ENCODE measurements at regions of chr1 and their contacts with region 1.

Region 1: GRCh38 chr1:37692078-37692833 is at the start of gene CDCA8:
- DNase-seq: peak; percentile 97 to 100 (median 98)
- ATAC-seq: peak; percentile 92
- H3K4me3 ChIP-seq: peak within 1 kb of the TSS; percentile 92
- H3K27ac ChIP-seq: peak within 1 kb of the TSS; percentile 90
- H3K4me1 ChIP-seq: peaks cover 19 to 32% of the 10 kb centered on the region in 2 experiments
- H3K27me3 ChIP-seq: no peaks in the 10 kb centered on the region
- CTCF ChIP-seq: peak; percentile 76 to 85 (median 84)
- EP300 ChIP-seq: no peak; the same call in 1 of the 2 replicates
- POLR2A ChIP-seq: peak; percentile 98
- RAD21 ChIP-seq: no peak
- polyA plus RNA-seq, gene CDCA8: 84.3 to 148 TPM

Region 2: GRCh38 chr1:37479255-37480124 is 212.8 kb before region 1 on chr1:
- CTCF ChIA-PET with region 1: no interaction called
- POLR2A ChIA-PET with region 1: interaction called, 11 read pairs
- in situ Hi-C with region 1: no loop called
- intact Hi-C with region 1: no loop called
- DNase-seq: peak; percentile 92 to 97 (median 94)
- ATAC-seq: peak; percentile 85
- H3K4me3 ChIP-seq: peak overlapping the region; percentile 35
- H3K27ac ChIP-seq: peak overlapping the region; percentile 94
- H3K4me1 ChIP-seq: peaks cover 52 to 74% of the 10 kb centered on the region in 2 experiments
- H3K27me3 ChIP-seq: no peaks in the 10 kb centered on the region
- CTCF ChIP-seq: no peak
- EP300 ChIP-seq: peak; percentile 73
- POLR2A ChIP-seq: peak; percentile 65
- RAD21 ChIP-seq: no peak

Region 3: DNA sequence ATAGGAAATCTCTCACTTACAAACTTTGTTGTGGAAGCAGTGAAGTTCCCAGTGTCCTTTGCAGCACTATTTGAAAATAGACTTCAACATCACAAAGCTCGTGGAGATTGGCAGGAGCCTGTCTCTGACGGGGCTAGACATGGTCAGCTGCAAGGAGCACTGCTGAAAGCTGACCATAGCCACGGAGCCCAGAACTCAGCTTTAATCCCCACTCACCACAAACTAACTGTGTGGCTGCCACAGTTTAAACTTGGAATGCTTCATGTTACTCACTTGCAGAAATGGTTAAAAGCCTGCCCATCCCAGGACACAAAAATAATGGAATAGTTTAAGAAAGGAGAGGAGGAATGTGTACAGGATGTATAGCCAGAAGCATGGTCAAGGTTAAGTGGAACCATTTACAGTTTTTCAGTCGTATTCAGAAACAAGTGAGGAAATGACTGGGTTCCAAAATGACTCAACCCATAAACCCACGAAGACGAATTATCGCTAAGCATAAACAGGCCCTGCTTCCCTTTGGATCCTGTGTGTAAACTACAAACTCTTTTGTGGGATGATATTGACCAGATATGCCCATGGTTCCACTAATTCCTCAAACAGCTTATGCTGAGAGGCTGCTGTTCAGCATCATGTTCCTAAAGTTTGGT is 117.3 kb before region 1 on chr1:
- CTCF ChIA-PET with region 1: no interaction called
- POLR2A ChIA-PET with region 1: no interaction called
- in situ Hi-C with region 1: no loop called
- intact Hi-C with region 1: no loop called
- DNase-seq: no peak
- ATAC-seq: no peak
- H3K4me3 ChIP-seq: no peak overlapping the region
- H3K27ac ChIP-seq: no peak overlapping the region
- H3K4me1 ChIP-seq: no peaks in the 10 kb centered on the region
- H3K27me3 ChIP-seq: no peaks in the 10 kb centered on the region
- CTCF ChIP-seq: no peak
- EP300 ChIP-seq: no peak
- POLR2A ChIP-seq: no peak
- RAD21 ChIP-seq: no peak

Region 4: GRCh38 chr1:37636435-37636834 is 55.8 kb before region 1 on chr1:
- CTCF ChIA-PET with region 1: no interaction called
- POLR2A ChIA-PET with region 1: no interaction called
- in situ Hi-C with region 1: no loop called
- intact Hi-C with region 1: no loop called
- DNase-seq: no peak
- ATAC-seq: no peak
- H3K4me3 ChIP-seq: no peak overlapping the region
- H3K27ac ChIP-seq: no peak overlapping the region
- H3K4me1 ChIP-seq: peaks cover 0 to 18% of the 10 kb centered on the region in 2 experiments; a peak in 1 of 5 replicates
- H3K27me3 ChIP-seq: peaks cover 61 to 74% of the 10 kb centered on the region in 2 experiments
- CTCF ChIP-seq: no peak
- EP300 ChIP-seq: no peak
- POLR2A ChIP-seq: no peak
- RAD21 ChIP-seq: no peak

Region 5: DNA sequence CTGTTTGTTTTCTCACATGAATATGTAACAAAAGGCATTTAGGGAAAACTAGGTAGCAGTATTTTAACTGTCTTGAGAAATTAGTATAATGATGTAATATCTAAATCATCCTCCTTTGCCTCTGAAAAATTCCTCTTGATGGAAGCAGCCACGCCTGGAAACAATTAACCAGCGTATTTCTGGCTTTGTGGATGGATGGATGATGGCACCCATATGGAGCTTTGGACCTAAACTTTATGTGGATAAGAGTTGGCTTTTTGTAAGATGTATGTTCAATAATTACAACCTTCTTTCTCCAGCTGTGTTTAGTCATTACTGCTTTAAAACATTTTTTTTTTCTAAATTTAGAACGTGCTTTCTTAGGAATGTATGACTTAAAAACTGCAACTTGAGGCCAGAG is 12.7 kb after region 1 on chr1:
- CTCF ChIA-PET with region 1: no interaction called
- POLR2A ChIA-PET with region 1: interaction called, 49 read pairs
- in situ Hi-C with region 1: no loop called
- intact Hi-C with region 1: no loop called
- DNase-seq: no peak
- ATAC-seq: no peak
- H3K4me3 ChIP-seq: no peak overlapping the region
- H3K27ac ChIP-seq: no peak overlapping the region
- H3K4me1 ChIP-seq: no peaks in the 10 kb centered on the region
- H3K27me3 ChIP-seq: no peaks in the 10 kb centered on the region
- CTCF ChIP-seq: no peak
- EP300 ChIP-seq: no peak
- POLR2A ChIP-seq: no peak
- RAD21 ChIP-seq: no peak

Region 6: DNA sequence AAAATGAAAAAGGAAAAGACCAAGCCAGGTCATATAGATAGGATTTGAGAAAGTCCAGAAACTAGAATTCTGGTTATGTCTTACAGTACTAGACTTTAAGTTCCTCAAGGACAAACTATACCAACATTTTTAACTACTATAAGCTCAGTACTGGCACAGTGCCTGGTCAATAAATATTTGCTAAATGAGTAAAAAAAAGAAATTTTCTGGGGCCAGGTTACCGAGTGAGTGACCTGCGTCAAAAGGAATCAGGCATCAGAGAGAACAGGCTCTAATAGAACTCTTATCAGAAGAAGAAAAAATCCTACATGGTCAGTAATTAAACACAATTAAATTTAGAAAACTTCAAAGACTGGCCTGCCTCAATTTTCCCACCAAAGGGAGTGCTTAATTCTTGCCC is 139.6 kb after region 1 on chr1:
- CTCF ChIA-PET with region 1: no interaction called
- POLR2A ChIA-PET with region 1: no interaction called
- in situ Hi-C with region 1: no loop called
- intact Hi-C with region 1: no loop called
- DNase-seq: no peak
- ATAC-seq: no peak
- H3K4me3 ChIP-seq: no peak overlapping the region
- H3K27ac ChIP-seq: no peak overlapping the region
- H3K4me1 ChIP-seq: no peaks in the 10 kb centered on the region
- H3K27me3 ChIP-seq: no peaks in the 10 kb centered on the region
- CTCF ChIP-seq: no peak
- EP300 ChIP-seq: no peak
- POLR2A ChIP-seq: no peak
- RAD21 ChIP-seq: no peak

Region 7: DNA sequence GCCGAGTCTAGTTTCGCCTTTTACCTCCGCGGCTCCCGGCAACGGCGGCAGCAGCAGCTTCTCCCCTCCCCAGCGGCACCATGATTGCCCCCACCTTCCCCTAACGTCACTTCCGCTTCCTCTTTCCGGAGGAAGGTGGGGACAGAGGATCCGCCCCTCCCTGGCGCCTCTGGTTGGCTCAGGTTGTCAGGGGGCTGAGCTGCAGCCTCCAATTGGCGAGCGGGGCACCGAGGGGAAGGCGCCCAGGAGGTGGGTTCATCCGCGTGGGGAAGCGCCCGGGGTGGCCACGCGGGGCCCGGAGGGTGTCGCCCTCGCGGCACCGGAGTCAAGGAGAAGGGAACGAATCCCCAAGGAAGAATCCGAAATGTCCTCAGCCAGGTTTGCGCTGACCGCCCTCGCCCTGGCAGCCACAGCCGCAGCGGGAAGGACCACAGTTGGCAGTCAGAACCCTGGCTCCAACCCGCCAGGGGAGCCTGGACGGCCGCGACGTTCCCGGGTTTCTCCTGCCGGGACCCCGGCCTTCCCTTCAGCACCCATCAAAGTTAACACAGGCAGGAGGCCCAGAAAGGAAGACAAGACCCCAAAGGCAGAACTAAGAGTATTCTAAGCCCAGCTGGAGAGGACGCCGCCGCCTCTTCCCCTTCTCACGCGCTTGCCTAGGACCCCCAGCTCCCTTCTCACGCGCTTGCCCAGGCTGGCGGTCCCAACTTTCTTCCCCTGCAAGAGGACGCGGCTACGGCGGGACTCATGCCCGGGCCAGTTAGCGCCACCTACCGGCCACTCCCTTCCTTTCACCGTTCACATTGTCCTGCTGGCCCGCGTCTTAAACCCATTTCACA is 167.5 kb after region 1 on chr1 and contains the start of gene MTF1:
- CTCF ChIA-PET with region 1: no interaction called
- POLR2A ChIA-PET with region 1: interaction called, 4 read pairs
- in situ Hi-C with region 1: no loop called
- intact Hi-C with region 1: loop called (anchors 2 kb)
- DNase-seq: peak; percentile 99 to 100 (median 99)
- ATAC-seq: peak; percentile 99
- H3K4me3 ChIP-seq: peak within 1 kb of the TSS; percentile 97
- H3K27ac ChIP-seq: peak within 1 kb of the TSS; percentile 81
- H3K4me1 ChIP-seq: peaks cover 21 to 22% of the 10 kb centered on the region in 2 experiments; a peak in 4 of 5 replicates
- H3K27me3 ChIP-seq: no peaks in the 10 kb centered on the region; a peak in 1 of 5 replicates
- CTCF ChIP-seq: peak; percentile 86 to 97 (median 90)
- EP300 ChIP-seq: 0 out of 2 replicates have a peak, but pooled peaks have one; percentile 4
- POLR2A ChIP-seq: peak; percentile 97
- RAD21 ChIP-seq: peak; percentile 66 to 85
- polyA plus RNA-seq, gene MTF1: 1.9 to 2.4 TPM

Region 8: DNA sequence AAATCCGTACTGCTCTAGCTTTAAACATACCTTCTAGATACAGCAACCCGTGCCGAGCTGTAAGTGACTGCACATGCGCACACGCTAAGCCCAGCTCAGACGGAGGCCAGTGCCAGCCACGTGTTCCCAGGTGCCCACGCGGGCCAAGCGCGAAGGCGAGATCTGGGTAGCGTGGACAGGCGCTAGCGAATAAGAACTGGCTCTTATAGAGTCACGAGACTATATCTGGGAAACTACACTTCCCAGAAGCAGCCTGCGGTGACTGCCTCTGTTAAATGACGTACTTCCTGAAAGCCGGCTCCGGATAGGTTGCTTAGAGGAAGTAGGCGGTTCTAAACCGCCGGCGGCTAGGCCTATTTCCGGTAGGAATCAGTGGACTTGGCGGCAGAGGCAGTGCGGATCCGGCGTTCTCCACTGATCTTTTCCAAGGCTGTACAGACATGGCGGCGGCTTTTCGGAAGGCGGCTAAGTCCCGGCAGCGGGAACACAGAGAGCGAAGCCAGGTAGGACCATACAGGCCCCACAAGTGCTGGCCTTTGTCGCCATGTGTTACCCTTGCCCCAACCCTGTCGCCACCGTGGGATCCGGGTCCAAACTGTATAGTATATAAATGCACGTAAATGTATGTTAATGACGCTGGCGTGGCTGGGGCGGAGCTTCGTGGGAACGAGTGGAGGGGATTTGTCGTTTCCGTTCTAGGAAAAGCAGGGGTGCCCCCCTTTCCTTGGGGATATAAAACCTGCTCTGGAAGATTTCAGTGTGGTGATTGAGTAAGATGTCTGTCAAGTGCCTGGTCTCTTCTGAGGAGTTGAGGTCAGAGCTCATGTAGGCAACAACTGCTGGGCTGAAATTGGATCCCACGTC is 320.3 kb after region 1 on chr1 and contains the start of gene UTP11:
- CTCF ChIA-PET with region 1: no interaction called
- POLR2A ChIA-PET with region 1: no interaction called
- in situ Hi-C with region 1: no loop called
- intact Hi-C with region 1: loop called (anchors 5 kb)
- DNase-seq: peak; percentile 94 to 99 (median 96)
- ATAC-seq: peak; percentile 89
- H3K4me3 ChIP-seq: peak within 1 kb of the TSS; percentile 89
- H3K27ac ChIP-seq: peak within 1 kb of the TSS; percentile 98
- H3K4me1 ChIP-seq: peaks cover 29 to 61% of the 10 kb centered on the region in 2 experiments
- H3K27me3 ChIP-seq: no peaks in the 10 kb centered on the region
- CTCF ChIP-seq: peak in 1 of 3 experiments; percentile 3; a peak in 1 of 6 replicates
- EP300 ChIP-seq: peak; percentile 44; the same call in 1 of the 2 replicates
- POLR2A ChIP-seq: peak; percentile 97
- RAD21 ChIP-seq: no peak
- polyA plus RNA-seq, gene UTP11: 269 to 303 TPM

Region 9: DNA sequence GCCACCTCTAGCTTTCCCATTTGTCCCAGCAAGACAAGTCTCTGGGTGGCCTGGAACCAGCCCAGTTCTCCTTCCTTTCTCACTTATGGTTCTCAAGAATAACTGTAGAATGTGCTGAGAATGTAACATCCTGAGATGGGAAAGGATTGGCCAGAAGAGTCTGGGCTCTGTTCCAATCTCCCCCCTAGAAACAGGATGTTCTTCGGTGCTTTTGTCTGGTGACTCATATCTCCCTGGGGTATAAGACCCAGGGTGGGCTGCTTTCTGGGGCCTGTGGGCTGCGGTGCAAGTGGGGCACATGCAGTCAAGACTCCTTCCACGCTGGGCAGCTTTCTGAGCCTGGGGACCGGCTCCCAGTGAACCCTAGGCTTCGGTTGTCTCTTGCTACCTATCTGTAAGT is 605.6 kb after region 1 on chr1:
- CTCF ChIA-PET with region 1: no interaction called
- POLR2A ChIA-PET with region 1: no interaction called
- in situ Hi-C with region 1: no loop called
- intact Hi-C with region 1: no loop called
- DNase-seq: no peak
- ATAC-seq: peak; percentile 25; the same call in 2 of the 3 replicates
- H3K4me3 ChIP-seq: no peak overlapping the region
- H3K27ac ChIP-seq: no peak overlapping the region
- H3K4me1 ChIP-seq: peaks cover 1 to 5% of the 10 kb centered on the region in 2 experiments; a peak in 3 of 5 replicates
- H3K27me3 ChIP-seq: no peaks in the 10 kb centered on the region
- CTCF ChIP-seq: no peak
- EP300 ChIP-seq: no peak
- POLR2A ChIP-seq: no peak
- RAD21 ChIP-seq: no peak